ENCODE measurements at regions of chr4 and their contacts with region 1.

Region 1: DNA sequence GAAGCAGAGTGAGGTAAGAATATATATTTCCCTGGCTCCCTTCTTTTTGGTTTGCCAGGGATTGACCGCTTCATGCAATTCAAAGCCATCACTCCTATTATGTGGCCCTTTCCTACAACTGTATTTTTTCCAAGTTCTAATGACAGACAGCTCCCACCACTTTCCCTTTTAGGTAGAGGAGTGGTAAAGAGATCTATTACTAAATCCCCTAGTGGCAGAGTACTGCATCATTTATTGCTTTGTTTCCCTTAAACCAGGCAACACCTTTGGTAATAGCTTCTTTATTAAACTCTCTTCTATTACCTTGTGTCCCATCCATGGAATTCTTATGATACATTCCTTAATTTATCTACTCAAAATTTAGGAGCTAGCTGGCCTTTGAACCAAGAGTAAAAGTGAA is 90.7 kb downstream of the CNOT6L start:
- DNase-seq: no peak
- ATAC-seq: no peak
- H3K4me3 Mint-ChIP-seq: no peak overlapping the region
- H3K27ac Mint-ChIP-seq: peak overlapping the region; percentile 44
- H3K4me1 Mint-ChIP-seq: peaks cover 31% of the 10 kb centered on the region
- H3K27me3 Mint-ChIP-seq: no peaks in the 10 kb centered on the region
- CTCF ChIP-seq: peak; percentile 47

Region 2: GRCh38 chr4:77681792-77682191 is 46.6 kb before region 1 on chr4:
- CTCF ChIA-PET with region 1: no interaction called
- POLR2A ChIA-PET with region 1: no interaction called
- intact Hi-C with region 1: no loop called
- DNase-seq: no peak
- ATAC-seq: no peak
- H3K4me3 Mint-ChIP-seq: no peak overlapping the region
- H3K27ac Mint-ChIP-seq: no peak overlapping the region
- H3K4me1 Mint-ChIP-seq: no peaks in the 10 kb centered on the region
- H3K27me3 Mint-ChIP-seq: peaks cover 1% of the 10 kb centered on the region
- CTCF ChIP-seq: no peak

Region 3: GRCh38 chr4:77715414-77716290 is 12.8 kb before region 1 on chr4:
- CTCF ChIA-PET with region 1: interaction called, 10 read pairs
- POLR2A ChIA-PET with region 1: no interaction called
- intact Hi-C with region 1: no loop called
- DNase-seq: no peak
- ATAC-seq: peak; percentile 75
- H3K4me3 Mint-ChIP-seq: peak overlapping the region; percentile 20
- H3K27ac Mint-ChIP-seq: peak overlapping the region; percentile 84
- H3K4me1 Mint-ChIP-seq: peaks cover 45% of the 10 kb centered on the region
- H3K27me3 Mint-ChIP-seq: no peaks in the 10 kb centered on the region
- CTCF ChIP-seq: no peak